GM12878 (cell line): ENCODE measurements at regions of chr6 and their contacts with region 1.

Region 1: DNA sequence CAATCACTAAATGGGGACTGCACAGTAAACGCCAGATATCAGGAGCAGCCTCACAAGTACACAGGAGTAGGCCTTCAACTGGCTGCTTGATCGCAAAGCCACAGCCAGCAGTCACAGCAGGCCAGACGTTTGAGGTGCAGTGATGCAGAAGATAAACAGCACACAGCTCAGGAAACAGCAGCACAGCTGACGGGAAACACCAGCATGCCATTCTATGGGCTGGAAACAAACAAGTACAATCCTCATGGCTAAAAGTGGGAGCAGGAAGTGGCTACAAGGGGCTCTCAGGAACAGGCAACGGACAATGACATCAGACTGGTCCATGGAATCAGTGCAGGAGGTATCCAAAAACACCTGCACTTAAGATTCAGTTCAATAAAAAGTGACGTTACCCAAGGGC is 111.0 kb downstream of the DTNBP1 start:
- DNase-seq: no peak
- ATAC-seq: no peak
- H3K4me3 ChIP-seq: no peak overlapping the region
- H3K27ac ChIP-seq: no peak overlapping the region
- H3K4me1 ChIP-seq: peaks cover 7% of the 10 kb centered on the region
- H3K27me3 ChIP-seq: no peaks in the 10 kb centered on the region
- CTCF ChIP-seq: no peak
- EP300 ChIP-seq: no peak
- POLR2A ChIP-seq: no peak
- RAD21 ChIP-seq: no peak

Region 2: GRCh38 chr6:15207923-15208322 is 343.9 kb before region 1 on chr6:
- CTCF ChIA-PET with region 1: no interaction called
- POLR2A ChIA-PET with region 1: no interaction called
- RAD21 ChIA-PET with region 1: no interaction called
- SMC1A ChIA-PET with region 1: no interaction called
- in situ Hi-C with region 1: no loop called
- intact Hi-C with region 1: no loop called
- DNase-seq: no peak
- ATAC-seq: no peak
- H3K4me3 ChIP-seq: no peak overlapping the region
- H3K27ac ChIP-seq: no peak overlapping the region
- H3K4me1 ChIP-seq: no peaks in the 10 kb centered on the region
- H3K27me3 ChIP-seq: no peaks in the 10 kb centered on the region
- CTCF ChIP-seq: no peak
- EP300 ChIP-seq: no peak
- POLR2A ChIP-seq: no peak
- RAD21 ChIP-seq: no peak

Region 3: GRCh38 chr6:15539722-15540270 is 12.0 kb before region 1 on chr6:
- CTCF ChIA-PET with region 1: no interaction called
- POLR2A ChIA-PET with region 1: no interaction called
- RAD21 ChIA-PET with region 1: interaction called, 3 read pairs
- SMC1A ChIA-PET with region 1: interaction called, 10 read pairs
- in situ Hi-C with region 1: no loop called
- intact Hi-C with region 1: no loop called
- DNase-seq: no peak
- ATAC-seq: no peak
- H3K4me3 ChIP-seq: no peak overlapping the region
- H3K27ac ChIP-seq: no peak overlapping the region
- H3K4me1 ChIP-seq: no peaks in the 10 kb centered on the region
- H3K27me3 ChIP-seq: no peaks in the 10 kb centered on the region
- CTCF ChIP-seq: no peak
- EP300 ChIP-seq: no peak
- POLR2A ChIP-seq: no peak
- RAD21 ChIP-seq: no peak